Astrocyte of the cerebellum (primary cell): ENCODE measurements at regions of chr1 and their contacts with region 1.

Region 1: DNA sequence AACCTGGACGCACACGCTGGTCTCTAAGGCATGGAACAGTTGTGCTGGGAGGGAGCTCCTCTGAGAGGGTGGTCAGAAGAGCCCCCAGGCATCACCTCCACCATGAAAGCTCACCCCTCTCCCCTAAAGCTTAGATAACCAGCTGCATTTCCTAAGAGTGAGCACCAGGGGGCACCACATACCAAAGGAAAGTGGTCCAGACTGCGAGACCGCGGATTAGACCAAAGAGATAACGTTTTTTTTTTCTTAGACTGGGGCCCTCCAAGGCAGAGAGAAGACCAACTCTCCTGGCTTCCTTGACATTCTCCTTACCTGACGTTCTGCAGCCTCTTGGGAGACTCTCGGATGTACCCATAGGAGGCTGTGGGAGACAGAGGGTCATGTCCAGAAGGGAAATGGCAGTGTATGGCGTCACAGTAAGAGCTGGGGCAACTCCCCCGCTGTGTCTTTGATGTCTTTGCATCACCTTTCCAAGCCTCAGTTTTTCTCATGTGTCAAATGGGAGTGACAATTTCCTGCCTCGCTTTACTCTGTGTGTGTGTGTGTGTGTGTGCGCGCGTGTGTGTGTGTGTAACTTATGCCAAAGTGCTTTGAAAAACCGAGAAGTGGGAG is 12.3 kb upstream of the IFNLR1 start:
- DNase-seq: peak; percentile 35
- H3K4me3 ChIP-seq: no peak overlapping the region
- CTCF ChIP-seq: peak; percentile 87

Region 2: GRCh38 chr1:23417570-23417969 is 781.8 kb before region 1 on chr1:
- in situ Hi-C with region 1: no loop called
- DNase-seq: no peak
- H3K4me3 ChIP-seq: no peak overlapping the region
- CTCF ChIP-seq: no peak

Region 3: DNA sequence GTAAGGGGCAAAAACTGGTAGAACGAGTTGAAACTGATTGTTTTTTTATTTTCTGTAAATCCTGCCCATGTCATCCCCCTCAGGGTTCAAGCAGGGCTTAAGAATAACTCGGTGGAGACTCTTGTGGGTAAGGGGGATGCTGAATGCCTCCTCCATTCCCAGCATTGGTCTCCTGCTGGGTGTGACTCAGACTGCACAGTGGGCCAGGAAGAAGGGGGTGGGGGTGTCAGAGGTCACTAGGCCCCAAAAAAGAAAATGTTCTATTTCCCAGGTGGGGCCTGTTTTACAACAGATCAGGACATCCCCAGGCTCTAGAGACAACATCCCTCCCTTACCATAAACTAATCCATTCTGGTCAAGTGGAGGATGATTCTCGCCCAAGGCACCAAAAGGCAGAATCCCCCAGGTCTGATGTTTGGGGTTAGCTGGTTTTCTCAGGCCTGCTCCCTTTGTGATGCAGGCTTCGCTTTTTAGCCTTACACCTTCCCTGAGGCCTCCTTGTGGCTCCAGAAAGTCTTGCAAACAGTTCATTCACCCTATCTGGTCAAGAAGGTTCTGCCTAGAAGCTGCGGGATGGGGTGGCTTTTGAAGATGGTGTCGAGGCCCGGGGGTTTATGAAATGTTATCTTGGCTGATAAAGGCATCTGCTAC is 109.1 kb after region 1 on chr1:
- in situ Hi-C with region 1: loop called (anchors 5 kb)
- DNase-seq: no peak
- H3K4me3 ChIP-seq: no peak overlapping the region
- CTCF ChIP-seq: peak; percentile 52

Region 4: DNA sequence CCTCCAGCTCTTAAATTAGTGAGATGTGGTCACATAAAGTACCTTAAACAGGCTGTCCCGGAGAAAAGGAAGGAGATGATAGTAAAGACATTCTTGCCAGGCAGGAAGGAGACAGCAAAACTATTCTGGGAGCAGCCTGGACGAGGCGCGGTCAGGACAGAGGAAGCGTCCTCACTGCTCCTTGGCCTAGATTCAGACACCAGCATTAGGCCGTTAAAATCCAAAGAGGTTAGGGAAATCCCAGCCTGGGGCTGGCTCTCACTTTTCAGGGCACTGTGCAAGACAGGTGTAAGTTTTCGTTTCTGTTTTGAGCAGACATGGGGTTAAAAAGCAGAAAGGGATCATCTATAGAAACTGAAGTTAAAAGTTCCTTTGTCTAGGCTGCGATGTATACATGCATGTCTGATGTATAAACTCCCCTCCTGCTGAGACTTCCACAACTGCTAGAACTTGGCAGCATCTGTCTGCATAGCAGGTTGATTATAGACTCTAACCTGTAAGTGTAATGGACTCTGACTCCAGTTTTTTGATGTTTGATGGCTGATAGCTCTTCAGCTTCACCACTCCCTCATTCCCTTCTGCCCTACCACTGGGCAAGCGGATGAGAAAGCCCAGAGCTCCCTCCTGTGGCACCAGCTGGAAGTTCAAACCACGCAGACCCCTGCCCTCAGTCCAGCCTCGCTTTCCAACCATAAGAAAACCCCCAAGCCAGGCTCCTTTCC is 192.6 kb after region 1 on chr1:
- in situ Hi-C with region 1: loop called (anchors 5 kb)
- DNase-seq: no peak
- H3K4me3 ChIP-seq: no peak overlapping the region
- CTCF ChIP-seq: peak; percentile 82

Region 5: GRCh38 chr1:24635195-24635843 is 435.9 kb after region 1 on chr1:
- in situ Hi-C with region 1: loop called (anchors 5 kb)
- DNase-seq: peak; percentile 67
- H3K4me3 ChIP-seq: no peak overlapping the region
- CTCF ChIP-seq: peak; percentile 59